Naive thymus-derived CD4-positive, alpha-beta T cell (primary cell): ENCODE measurements at regions of chr2 and their contacts with region 1.

Region 1: DNA sequence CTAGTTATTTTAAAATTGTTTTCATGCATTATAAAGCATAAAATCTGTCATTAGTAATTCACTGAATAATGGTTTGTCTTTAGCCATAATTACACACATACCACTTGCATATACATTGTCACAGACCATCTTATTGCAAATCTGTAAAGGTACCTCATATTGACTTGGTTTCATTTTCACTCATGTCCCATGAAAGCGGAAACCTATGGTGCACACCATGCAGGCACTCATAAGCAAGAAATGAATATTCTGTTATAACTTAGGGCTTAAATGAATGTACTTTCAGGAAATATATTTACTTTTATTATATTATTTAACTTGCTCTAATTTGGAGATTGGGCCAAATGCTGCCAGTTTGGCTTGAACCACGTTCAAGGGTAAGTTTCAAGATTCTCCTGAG is 29.2 kb upstream of the STK17B start:
- DNase-seq: peak in 3 of 9 donors; percentile 34 to 49 (median 43)
- ATAC-seq: peak; percentile 78
- H3K4me3 ChIP-seq: peak overlapping the region; percentile 45
- H3K4me3 Mint-ChIP-seq: peak overlapping the region; percentile 41 to 83 (median 75)
- H3K27ac ChIP-seq: peak overlapping the region; percentile 65
- H3K27ac Mint-ChIP-seq: peak overlapping the region; percentile 54 to 94 (median 87)
- H3K4me1 ChIP-seq: peaks cover 28 to 34% of the 10 kb centered on the region in 2 donors
- H3K4me1 Mint-ChIP-seq: peaks cover 20 to 71% (median 53%) of the 10 kb centered on the region in 7 donors
- H3K27me3 ChIP-seq: no peaks in the 10 kb centered on the region
- H3K27me3 Mint-ChIP-seq: no peaks in the 10 kb centered on the region

Region 2: DNA sequence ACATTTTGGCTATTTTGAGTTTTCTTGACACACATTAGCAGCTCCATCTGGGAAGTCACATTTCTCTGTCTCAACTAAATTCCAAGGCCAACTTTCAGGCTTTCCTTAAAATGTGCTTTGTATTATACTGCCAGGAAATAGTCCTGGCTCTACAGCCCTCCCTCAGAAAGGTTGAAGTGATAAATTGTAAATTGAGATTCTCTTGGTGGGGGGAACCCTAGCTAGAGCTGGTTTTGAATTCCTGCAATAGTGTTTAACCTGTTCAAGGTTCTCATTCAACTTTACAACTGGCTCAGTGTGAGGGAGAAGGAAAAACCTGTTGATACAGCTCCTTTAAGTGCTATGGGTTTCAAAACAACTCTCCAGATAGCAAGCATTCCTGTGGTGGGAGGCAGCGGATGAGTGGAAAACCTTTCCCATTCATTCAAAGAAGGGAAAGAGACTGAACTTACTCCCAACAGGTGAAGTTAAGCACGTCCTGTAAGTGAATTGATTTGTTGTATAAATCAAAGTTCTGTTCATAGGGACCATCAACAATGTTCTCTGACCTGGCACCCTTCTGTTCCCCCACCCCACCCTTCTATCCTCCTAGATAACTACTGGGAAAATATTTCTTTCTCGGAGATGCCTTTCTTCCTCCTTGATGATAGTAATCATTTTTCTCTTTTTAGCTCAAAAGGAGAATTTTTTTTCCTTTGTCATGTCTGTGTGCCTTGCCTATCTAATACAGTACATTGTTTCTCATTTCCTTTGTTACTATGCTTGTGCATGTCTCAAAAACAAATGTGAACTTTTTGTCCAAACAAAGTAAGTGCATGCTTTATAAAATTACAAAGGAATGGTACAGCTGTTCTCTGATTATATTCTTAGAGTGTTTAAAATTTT is 587.7 kb before region 1 on chr2:
- CTCF ChIA-PET with region 1: no interaction called
- POLR2A ChIA-PET with region 1: no interaction called
- intact Hi-C with region 1: no loop called
- DNase-seq: no peak
- ATAC-seq: no peak
- H3K4me3 ChIP-seq: no peak overlapping the region
- H3K4me3 Mint-ChIP-seq: peak overlapping the region in 1 of 10 donors; percentile 17
- H3K27ac ChIP-seq: no peak overlapping the region
- H3K27ac Mint-ChIP-seq: peak overlapping the region in 5 of 9 donors; percentile 4 to 77 (median 43)
- H3K4me1 ChIP-seq: no peaks in the 10 kb centered on the region
- H3K4me1 Mint-ChIP-seq: peaks cover 0 to 30% (median 16%) of the 10 kb centered on the region in 7 donors
- H3K27me3 ChIP-seq: no peaks in the 10 kb centered on the region
- H3K27me3 Mint-ChIP-seq: no peaks in the 10 kb centered on the region

Region 3: DNA sequence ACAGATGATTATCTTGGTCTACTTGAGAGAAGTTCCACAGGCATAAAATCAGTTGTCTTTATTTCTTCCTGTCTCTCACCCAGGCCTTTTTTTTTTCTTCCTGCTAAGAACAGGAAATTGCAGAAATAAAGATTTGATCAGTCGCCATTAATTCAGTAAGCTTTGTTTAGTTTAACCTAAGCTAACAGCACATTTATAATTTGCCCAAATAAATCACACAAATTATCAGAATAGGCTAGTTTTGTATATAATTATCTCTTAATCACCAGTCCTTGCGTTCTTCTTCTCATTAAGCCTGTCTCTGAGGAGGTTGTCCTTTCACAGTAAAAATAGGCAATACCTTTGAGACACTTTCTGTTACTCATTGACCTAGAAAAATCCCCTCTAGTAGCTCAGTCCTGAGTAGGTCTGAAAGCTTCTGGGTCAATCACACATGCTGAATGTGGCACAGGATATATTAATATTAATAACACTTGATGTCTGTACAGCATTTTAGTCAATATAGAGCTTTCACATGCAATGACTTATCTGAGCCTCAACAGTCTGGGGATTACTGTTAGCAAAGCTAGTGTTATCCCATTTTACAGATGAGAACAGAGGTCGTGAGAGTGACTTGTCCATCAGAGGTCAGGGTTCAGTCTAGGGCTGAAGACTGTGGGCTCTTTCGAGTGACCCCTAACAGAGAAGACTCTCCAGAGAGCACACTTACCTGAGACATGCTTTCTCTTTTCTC is 18.0 kb before region 1 on chr2:
- CTCF ChIA-PET with region 1: interaction called, 3 read pairs
- POLR2A ChIA-PET with region 1: interaction called, 124 read pairs
- intact Hi-C with region 1: loop called (anchors 1 to 2 kb)
- DNase-seq: peak in 1 of 9 donors; percentile 48
- ATAC-seq: peak; percentile 39
- H3K4me3 ChIP-seq: peak overlapping the region; percentile 34
- H3K4me3 Mint-ChIP-seq: peak overlapping the region; percentile 27 to 80 (median 70)
- H3K27ac ChIP-seq: peak overlapping the region; percentile 72
- H3K27ac Mint-ChIP-seq: peak overlapping the region; percentile 89 to 97 (median 93)
- H3K4me1 ChIP-seq: peaks cover 69 to 76% of the 10 kb centered on the region in 2 donors
- H3K4me1 Mint-ChIP-seq: peaks cover 55 to 98% (median 85%) of the 10 kb centered on the region in 7 donors
- H3K27me3 ChIP-seq: no peaks in the 10 kb centered on the region
- H3K27me3 Mint-ChIP-seq: no peaks in the 10 kb centered on the region

Region 4: GRCh38 chr2:196187898-196188458 is 12.6 kb before region 1 on chr2:
- CTCF ChIA-PET with region 1: interaction called, 3 read pairs
- POLR2A ChIA-PET with region 1: interaction called, 124 read pairs
- intact Hi-C with region 1: loop called in 1 of 2 experiments (anchors 1 kb)
- DNase-seq: no peak
- ATAC-seq: no peak
- H3K4me3 ChIP-seq: no peak overlapping the region
- H3K4me3 Mint-ChIP-seq: peak overlapping the region in 6 of 10 donors; percentile 5 to 65 (median 35)
- H3K27ac ChIP-seq: no peak overlapping the region
- H3K27ac Mint-ChIP-seq: peak overlapping the region in 7 of 9 donors; percentile 56 to 91 (median 79)
- H3K4me1 ChIP-seq: peaks cover 27 to 67% of the 10 kb centered on the region in 2 donors
- H3K4me1 Mint-ChIP-seq: peaks cover 22 to 100% (median 95%) of the 10 kb centered on the region in 7 donors
- H3K27me3 ChIP-seq: no peaks in the 10 kb centered on the region
- H3K27me3 Mint-ChIP-seq: no peaks in the 10 kb centered on the region

Region 5: GRCh38 chr2:196289000-196289399 is 88.4 kb after region 1 on chr2:
- CTCF ChIA-PET with region 1: no interaction called
- POLR2A ChIA-PET with region 1: no interaction called
- intact Hi-C with region 1: no loop called
- DNase-seq: no peak
- ATAC-seq: peak; percentile 18
- H3K4me3 ChIP-seq: no peak overlapping the region
- H3K4me3 Mint-ChIP-seq: peak overlapping the region in 1 of 10 donors; percentile 9
- H3K27ac ChIP-seq: no peak overlapping the region
- H3K27ac Mint-ChIP-seq: peak overlapping the region in 3 of 9 donors; percentile 26 to 64 (median 58)
- H3K4me1 ChIP-seq: peaks cover 6 to 10% of the 10 kb centered on the region in 2 donors
- H3K4me1 Mint-ChIP-seq: peaks cover 22 to 80% (median 54%) of the 10 kb centered on the region in 7 donors
- H3K27me3 ChIP-seq: no peaks in the 10 kb centered on the region
- H3K27me3 Mint-ChIP-seq: no peaks in the 10 kb centered on the region

Region 6: GRCh38 chr2:196607073-196607472 is 406.5 kb after region 1 on chr2:
- CTCF ChIA-PET with region 1: no interaction called
- POLR2A ChIA-PET with region 1: no interaction called
- intact Hi-C with region 1: no loop called
- DNase-seq: no peak
- ATAC-seq: no peak
- H3K4me3 ChIP-seq: no peak overlapping the region
- H3K4me3 Mint-ChIP-seq: no peak overlapping the region
- H3K27ac ChIP-seq: no peak overlapping the region
- H3K27ac Mint-ChIP-seq: no peak overlapping the region
- H3K4me1 ChIP-seq: no peaks in the 10 kb centered on the region
- H3K4me1 Mint-ChIP-seq: no peaks in the 10 kb centered on the region
- H3K27me3 ChIP-seq: no peaks in the 10 kb centered on the region
- H3K27me3 Mint-ChIP-seq: peaks cover 0 to 18% (median 10%) of the 10 kb centered on the region in 5 donors